B cell (primary cell): ENCODE measurements at regions of chr7 and their contacts with region 1.

Region 1: GRCh38 chr7:107638594-107638993 is 22.0 kb upstream of the SLC26A4 start:
- DNase-seq: peak; percentile 82
- ATAC-seq: peak; percentile 77
- H3K4me3 ChIP-seq: peak overlapping the region in 4 of 5 experiments; percentile 7 to 52 (median 26)
- H3K4me3 Mint-ChIP-seq: peak overlapping the region; percentile 77
- H3K27ac ChIP-seq: peak overlapping the region; percentile 78 to 85
- H3K27ac Mint-ChIP-seq: peak overlapping the region; percentile 96
- H3K4me1 ChIP-seq: peaks cover 44 to 56% of the 10 kb centered on the region in 2 donors
- H3K4me1 Mint-ChIP-seq: peaks cover 56% of the 10 kb centered on the region
- H3K27me3 ChIP-seq: no peaks in the 10 kb centered on the region
- H3K27me3 Mint-ChIP-seq: no peaks in the 10 kb centered on the region
- CTCF ChIP-seq: no peak

Region 2: GRCh38 chr7:107563775-107564552 is 74.6 kb before region 1 on chr7 and contains the starts of genes COG5 and DUS4L:
- CTCF ChIA-PET with region 1: no interaction called
- POLR2A ChIA-PET with region 1: no interaction called
- intact Hi-C with region 1: loop called (anchors 2 kb)
- DNase-seq: peak; percentile 92
- ATAC-seq: peak; percentile 93
- H3K4me3 ChIP-seq: peak within 1 kb of the TSS; percentile 86 to 98 (median 93)
- H3K4me3 Mint-ChIP-seq: peak within 1 kb of the TSS; percentile 88
- H3K27ac ChIP-seq: peak within 1 kb of the TSS; percentile 88 to 94
- H3K27ac Mint-ChIP-seq: peak within 1 kb of the TSS; percentile 94
- H3K4me1 ChIP-seq: peaks cover 18 to 23% of the 10 kb centered on the region in 2 donors
- H3K4me1 Mint-ChIP-seq: peaks cover 50% of the 10 kb centered on the region
- H3K27me3 ChIP-seq: no peaks in the 10 kb centered on the region
- H3K27me3 Mint-ChIP-seq: no peaks in the 10 kb centered on the region
- CTCF ChIP-seq: no peak
- total RNA-seq, gene COG5: 73.0 and 74.8 TPM in 2 replicates
- total RNA-seq, gene DUS4L: 17.6 and 18.7 TPM in 2 replicates

Region 3: DNA sequence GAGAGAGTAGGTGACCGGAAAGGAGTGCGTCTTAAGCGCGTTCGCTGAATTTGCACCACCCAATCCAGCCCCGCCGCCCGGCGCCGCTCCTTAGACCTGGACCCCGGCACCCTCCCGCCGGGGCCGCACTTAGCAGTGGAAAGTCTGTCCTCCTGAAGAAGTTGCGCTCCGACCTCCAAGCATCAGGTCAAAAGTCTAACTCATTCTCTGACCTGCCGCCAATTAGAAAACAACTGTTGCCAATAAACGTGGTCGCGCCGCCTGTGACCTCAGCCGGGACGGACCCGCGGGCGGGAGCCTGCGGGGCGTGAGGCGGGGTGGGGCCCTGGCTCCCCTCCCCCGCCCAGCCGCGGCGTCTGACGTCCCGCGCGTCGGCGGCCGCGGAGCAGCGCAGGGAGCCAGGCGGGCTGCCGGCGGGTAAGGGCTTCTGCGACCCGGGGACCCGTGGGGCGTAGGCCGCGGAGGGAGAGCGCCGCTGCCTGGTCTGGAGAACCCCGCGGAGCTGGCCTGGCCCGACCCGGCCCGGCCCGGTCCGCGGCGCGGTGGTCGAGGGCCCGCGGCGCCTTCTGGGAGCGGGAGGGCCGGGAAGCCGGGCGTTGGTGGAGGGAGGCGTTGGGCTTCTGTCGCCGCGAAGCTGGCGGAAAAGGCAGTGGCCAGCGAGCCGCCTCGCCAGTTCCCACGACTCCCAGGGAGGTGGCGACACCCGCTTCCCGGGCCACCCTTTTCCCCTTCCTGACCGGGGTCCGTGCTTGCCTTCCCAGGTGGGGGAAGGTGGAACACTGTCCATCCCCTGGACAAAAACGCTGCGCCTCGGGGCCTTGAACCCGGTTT is 58.5 kb before region 1 on chr7 and contains the start of gene BCAP29:
- CTCF ChIA-PET with region 1: interaction called, 3 read pairs
- POLR2A ChIA-PET with region 1: no interaction called
- intact Hi-C with region 1: loop called (anchors 2 kb)
- DNase-seq: peak; percentile 87
- ATAC-seq: peak; percentile 98
- H3K4me3 ChIP-seq: peak within 1 kb of the TSS; percentile 75 to 93 (median 85)
- H3K4me3 Mint-ChIP-seq: peak within 1 kb of the TSS; percentile 85
- H3K27ac ChIP-seq: peak within 1 kb of the TSS; percentile 66 to 80
- H3K27ac Mint-ChIP-seq: peak within 1 kb of the TSS; percentile 79
- H3K4me1 ChIP-seq: peaks cover 4 to 7% of the 10 kb centered on the region in 2 donors
- H3K4me1 Mint-ChIP-seq: peaks cover 23% of the 10 kb centered on the region
- H3K27me3 ChIP-seq: no peaks in the 10 kb centered on the region
- H3K27me3 Mint-ChIP-seq: no peaks in the 10 kb centered on the region
- CTCF ChIP-seq: no peak
- total RNA-seq, gene BCAP29: 27.3 and 31.8 TPM in 2 replicates

Region 4: DNA sequence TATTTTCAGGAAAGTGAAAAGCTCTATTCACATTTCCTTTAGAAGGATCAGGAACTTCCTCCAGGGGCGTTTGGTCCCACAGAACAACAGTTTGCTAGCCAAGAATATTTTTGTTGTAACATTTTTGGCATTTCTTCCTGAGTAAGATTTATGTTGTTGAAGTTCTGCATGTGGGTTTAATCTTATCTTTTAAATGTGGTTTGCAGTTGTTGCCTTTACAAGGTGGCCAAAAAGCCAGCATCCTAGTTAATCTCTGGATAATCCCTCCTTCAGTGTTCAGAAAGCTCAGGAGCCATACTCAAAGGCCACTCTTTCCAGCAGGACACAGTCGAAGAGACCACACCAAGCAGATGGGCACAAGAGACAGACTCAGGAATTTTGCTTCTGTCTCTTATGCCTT is 52.0 kb after region 1 on chr7:
- CTCF ChIA-PET with region 1: no interaction called
- POLR2A ChIA-PET with region 1: interaction called, 10 read pairs
- intact Hi-C with region 1: no loop called
- DNase-seq: no peak
- ATAC-seq: no peak
- H3K4me3 ChIP-seq: no peak overlapping the region
- H3K4me3 Mint-ChIP-seq: no peak overlapping the region
- H3K27ac ChIP-seq: no peak overlapping the region
- H3K27ac Mint-ChIP-seq: no peak overlapping the region
- H3K4me1 ChIP-seq: no peaks in the 10 kb centered on the region
- H3K4me1 Mint-ChIP-seq: no peaks in the 10 kb centered on the region
- H3K27me3 ChIP-seq: peaks cover 0 to 4% (median 0%) of the 10 kb centered on the region in 4 experiments
- H3K27me3 Mint-ChIP-seq: peaks cover 22% of the 10 kb centered on the region
- CTCF ChIP-seq: no peak